Activated CD4-positive, alpha-beta T cell treated with anti-CD3 and anti-CD28 coated beads for 36 hours (primary cell): ENCODE measurements at regions of chr22 and their contacts with region 1.

Region 1: DNA sequence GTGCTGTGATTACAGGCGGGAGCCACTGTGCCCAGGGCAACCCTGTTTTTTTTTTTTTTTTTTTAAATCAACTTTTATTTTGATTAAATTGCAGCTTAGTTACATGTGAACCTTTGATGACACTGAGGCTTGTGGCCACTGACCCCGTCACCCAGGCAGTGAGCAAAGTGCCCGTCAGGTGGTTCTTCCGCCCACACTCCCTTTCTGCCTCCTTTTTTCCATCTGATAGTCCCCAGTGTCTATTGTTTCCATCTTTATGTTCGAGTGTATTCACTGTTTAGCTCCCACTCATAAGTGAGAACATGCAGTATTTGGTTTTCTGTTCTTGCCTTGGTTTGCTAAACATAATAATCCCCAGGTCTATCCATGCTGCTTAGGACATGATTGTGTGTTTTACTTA is 110.9 kb upstream of the GRK3 start:
- DNase-seq: peak; percentile 69
- ATAC-seq: peak; percentile 53
- H3K4me3 Mint-ChIP-seq: no peak overlapping the region
- H3K27ac Mint-ChIP-seq: peak overlapping the region; percentile 64
- H3K4me1 Mint-ChIP-seq: peaks cover 48% of the 10 kb centered on the region
- H3K27me3 Mint-ChIP-seq: no peaks in the 10 kb centered on the region

Region 2: DNA sequence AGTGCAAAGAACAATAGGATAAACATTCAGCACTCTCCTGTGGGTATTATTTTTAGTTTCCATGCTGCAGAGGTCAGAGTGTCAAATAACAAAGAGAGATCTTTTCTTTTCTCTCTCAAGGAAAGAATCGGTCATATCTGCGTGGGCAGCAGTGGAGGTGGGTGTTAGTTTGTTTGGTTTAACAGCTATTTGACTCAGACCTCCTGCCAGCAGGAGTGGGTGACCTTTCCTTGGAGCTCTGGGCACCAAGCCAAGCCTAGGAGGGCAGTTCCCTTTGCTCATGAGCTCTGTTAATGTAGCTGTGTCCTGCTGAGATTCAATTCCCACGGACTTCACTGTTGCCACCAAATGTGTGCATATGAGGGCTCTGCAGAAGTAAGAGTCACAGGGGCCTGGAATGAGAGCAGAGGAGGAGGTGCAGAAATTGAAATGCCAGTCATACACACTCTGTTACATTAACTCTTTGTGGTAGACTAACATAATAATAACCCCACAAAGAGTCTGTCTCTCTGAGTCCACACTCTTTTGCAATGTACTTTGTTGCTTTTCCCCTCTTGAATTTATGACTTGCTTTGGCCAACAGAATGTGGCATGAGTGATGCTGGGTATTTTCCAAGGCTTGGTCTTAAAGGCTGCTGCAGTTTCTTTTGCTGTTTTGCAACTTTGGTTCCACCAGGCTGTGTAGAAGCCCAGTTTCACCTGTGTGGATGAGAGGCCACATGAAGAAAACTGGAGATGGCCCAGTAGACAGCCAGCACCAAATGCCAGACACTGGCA is 34.9 kb after region 1 on chr22:
- CTCF ChIA-PET with region 1: interaction called, 3 read pairs
- POLR2A ChIA-PET with region 1: no interaction called
- intact Hi-C with region 1: loop called in 1 of 2 experiments (anchors 1 kb)
- DNase-seq: peak; percentile 80
- ATAC-seq: peak; percentile 43
- H3K4me3 Mint-ChIP-seq: no peak overlapping the region
- H3K27ac Mint-ChIP-seq: no peak overlapping the region
- H3K4me1 Mint-ChIP-seq: peaks cover 47% of the 10 kb centered on the region
- H3K27me3 Mint-ChIP-seq: peaks cover 2% of the 10 kb centered on the region